Heart left ventricle (tissue), 16 donors: ENCODE measurements at regions of chr12 and their contacts with region 1.

Region 1: DNA sequence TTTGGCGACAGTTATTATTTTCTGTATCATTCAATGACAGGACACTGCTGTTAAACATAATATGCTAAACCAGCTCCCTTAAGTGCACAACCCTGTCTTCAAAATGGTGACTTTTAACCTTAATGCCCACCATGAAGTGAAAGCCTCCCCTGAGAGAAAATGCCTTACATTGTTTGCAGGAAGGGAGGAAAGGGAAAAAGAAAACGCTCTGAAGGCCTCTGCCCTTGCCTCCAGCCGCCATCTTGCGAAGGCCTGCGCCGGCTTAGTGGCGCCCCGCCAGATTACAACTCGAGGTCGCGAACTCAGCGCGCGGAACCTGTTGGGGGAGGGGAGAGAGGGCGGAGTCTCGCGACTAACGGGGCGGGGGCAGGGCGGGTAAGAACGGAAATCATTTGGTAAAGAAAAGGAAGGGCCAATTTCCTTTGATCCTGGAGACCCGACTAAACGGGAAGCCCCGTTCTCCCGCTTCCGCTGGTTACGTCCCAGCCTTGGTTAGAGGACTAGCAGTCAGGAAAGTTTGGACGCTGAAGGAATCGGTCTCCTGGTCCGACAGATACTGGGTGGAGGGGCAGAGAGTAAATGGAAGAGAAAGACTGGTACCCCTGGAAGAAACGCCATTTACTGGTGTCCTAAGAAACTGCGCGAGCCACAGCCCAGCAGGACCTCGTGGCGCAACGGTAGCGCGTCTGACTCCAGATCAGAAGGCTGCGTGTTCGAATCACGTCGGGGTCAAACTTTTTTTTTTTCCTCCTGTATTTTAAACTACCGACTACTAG is 11.6 kb upstream of the TMPO start:
- DNase-seq: peak; percentile 93 to 97 (median 96)
- ATAC-seq: peak; percentile 93 to 96 (median 95)
- H3K4me3 ChIP-seq: peak overlapping the region; percentile 39 to 83 (median 62)
- H3K27ac ChIP-seq: peak overlapping the region; percentile 88 to 99 (median 95)
- H3K4me1 ChIP-seq: peaks cover 0 to 10% (median 0%) of the 10 kb centered on the region in 12 donors
- H3K27me3 ChIP-seq: no peaks in the 10 kb centered on the region
- CTCF ChIP-seq: no peak
- POLR2A ChIP-seq: peak in 1 of 2 donors; percentile 6

Region 2: GRCh38 chr12:98424726-98425401 is 78.9 kb before region 1 on chr12:
- intact Hi-C with region 1: loop called in 1 of 10 experiments (anchors 1 kb)
- DNase-seq: peak in 4 of 5 donors; percentile 45 to 63 (median 54)
- ATAC-seq: peak in 3 of 4 donors; percentile 59 to 74 (median 73)
- H3K4me3 ChIP-seq: no peak overlapping the region
- H3K27ac ChIP-seq: no peak overlapping the region
- H3K4me1 ChIP-seq: peaks cover 0 to 13% (median 7%) of the 10 kb centered on the region in 12 donors
- H3K27me3 ChIP-seq: no peaks in the 10 kb centered on the region
- CTCF ChIP-seq: peak; percentile 57 to 81 (median 70)
- POLR2A ChIP-seq: no peak

Region 3: GRCh38 chr12:98490501-98491453 is 13.0 kb before region 1 on chr12:
- intact Hi-C with region 1: loop called in 2 of 10 experiments (anchors 1 kb)
- DNase-seq: peak; percentile 78 to 90 (median 85)
- ATAC-seq: peak; percentile 82 to 93 (median 88)
- H3K4me3 ChIP-seq: peak overlapping the region in 7 of 12 donors; percentile 13 to 40 (median 25)
- H3K27ac ChIP-seq: peak overlapping the region in 11 of 12 donors; percentile 25 to 67 (median 55)
- H3K4me1 ChIP-seq: peaks cover 0 to 11% (median 7%) of the 10 kb centered on the region in 12 donors
- H3K27me3 ChIP-seq: no peaks in the 10 kb centered on the region
- CTCF ChIP-seq: peak; percentile 70 to 94 (median 85)
- POLR2A ChIP-seq: no peak

Region 4: GRCh38 chr12:98516184-98516873 is 12.5 kb after region 1 on chr12:
- intact Hi-C with region 1: loop called in 3 of 10 experiments (anchors 1 to 2 kb)
- DNase-seq: peak; percentile 60 to 80 (median 76)
- ATAC-seq: peak; percentile 36 to 66 (median 42)
- H3K4me3 ChIP-seq: peak overlapping the region; percentile 65 to 99 (median 96)
- H3K27ac ChIP-seq: peak overlapping the region; percentile 89 to 98 (median 94)
- H3K4me1 ChIP-seq: peaks cover 0 to 52% (median 23%) of the 10 kb centered on the region in 12 donors
- H3K27me3 ChIP-seq: no peaks in the 10 kb centered on the region
- CTCF ChIP-seq: peak; percentile 55 to 90 (median 76)
- POLR2A ChIP-seq: no peak

Region 5: GRCh38 chr12:98593351-98594049 is 89.7 kb after region 1 on chr12 and contains the start of gene SLC25A3:
- intact Hi-C with region 1: loop called in 2 of 10 experiments (anchors 5 to 10 kb)
- DNase-seq: peak; percentile 97 to 99 (median 98)
- ATAC-seq: peak; percentile 99
- H3K4me3 ChIP-seq: peak within 1 kb of the TSS; percentile 58 to 98 (median 90)
- H3K27ac ChIP-seq: peak within 1 kb of the TSS; percentile 97 to 100 (median 99)
- H3K4me1 ChIP-seq: peaks cover 0 to 36% (median 23%) of the 10 kb centered on the region in 12 donors
- H3K27me3 ChIP-seq: no peaks in the 10 kb centered on the region
- CTCF ChIP-seq: no peak
- POLR2A ChIP-seq: peak; percentile 81 to 99
- total RNA-seq, gene SLC25A3: 852 to 2,779 (median 1,586) TPM

Region 6: DNA sequence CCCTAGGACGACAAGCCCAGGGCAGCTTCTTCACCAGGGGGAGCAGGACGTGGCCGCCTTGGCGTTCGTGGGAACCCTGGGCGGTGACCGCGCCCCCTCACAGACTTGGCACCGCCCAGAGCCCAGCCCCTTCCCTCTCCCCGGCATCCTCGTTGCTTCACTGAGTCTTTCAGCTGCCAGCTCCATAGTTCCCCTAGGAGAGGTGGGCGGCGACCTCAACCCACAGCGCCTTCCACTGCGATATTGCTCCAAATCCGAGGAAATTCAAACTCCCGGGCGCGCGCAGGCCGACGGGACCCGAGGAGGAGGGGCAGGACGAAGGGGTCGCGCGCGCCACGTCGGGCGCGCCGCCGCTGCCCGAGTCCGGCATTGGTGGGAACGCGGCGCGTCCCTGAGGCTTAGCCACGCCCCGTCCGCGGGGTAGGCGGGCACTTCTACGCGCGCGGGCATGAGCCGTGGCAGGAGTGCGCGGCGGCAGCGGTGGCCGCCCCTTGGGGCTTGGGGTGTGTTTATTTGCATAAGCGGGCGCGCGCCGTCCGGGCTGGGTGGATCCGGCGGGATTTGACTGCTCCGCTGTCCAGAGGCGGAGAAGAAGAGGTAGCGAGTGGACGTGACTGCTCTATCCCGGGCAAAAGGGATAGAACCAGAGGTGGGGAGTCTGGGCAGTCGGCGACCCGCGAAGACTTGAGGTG is 141.1 kb after region 1 on chr12 and contains the starts of genes APAF1 and IKBIP:
- intact Hi-C with region 1: loop called in 2 of 10 experiments (anchors 2 to 5 kb)
- DNase-seq: peak; percentile 97 to 99 (median 98)
- ATAC-seq: peak; percentile 98 to 99 (median 99)
- H3K4me3 ChIP-seq: peak within 1 kb of the TSS; percentile 75 to 98 (median 92)
- H3K27ac ChIP-seq: peak within 1 kb of the TSS; percentile 55 to 93 (median 89)
- H3K4me1 ChIP-seq: peaks cover 0 to 35% (median 19%) of the 10 kb centered on the region in 12 donors
- H3K27me3 ChIP-seq: no peaks in the 10 kb centered on the region
- CTCF ChIP-seq: peak in 2 of 12 donors; percentile 3 to 6
- POLR2A ChIP-seq: peak in 1 of 2 donors; percentile 80
- total RNA-seq, gene APAF1: 2.9 to 11.6 (median 3.8) TPM
- total RNA-seq, gene IKBIP: 3.6 to 16.5 (median 4.8) TPM